Left ventricle myocardium superior (tissue), 1 donor: ENCODE measurements at regions of chr9 and their contacts with region 1.

Region 1: GRCh38 chr9:4382722-4383317 is 83.0 kb upstream of the GLIS3 start:
- DNase-seq: no peak
- ATAC-seq: no peak

Region 2: GRCh38 chr9:4299005-4299795 is 83.6 kb before region 1 on chr9:
- intact Hi-C with region 1: no loop called
- DNase-seq: peak; percentile 57
- ATAC-seq: peak; percentile 14

Region 3: GRCh38 chr9:4640027-4640426 is 257.2 kb after region 1 on chr9:
- intact Hi-C with region 1: loop called (anchors 5 kb)
- DNase-seq: no peak
- ATAC-seq: no peak